ENCODE measurements at regions of chr11 and their contacts with region 1.

Region 1: DNA sequence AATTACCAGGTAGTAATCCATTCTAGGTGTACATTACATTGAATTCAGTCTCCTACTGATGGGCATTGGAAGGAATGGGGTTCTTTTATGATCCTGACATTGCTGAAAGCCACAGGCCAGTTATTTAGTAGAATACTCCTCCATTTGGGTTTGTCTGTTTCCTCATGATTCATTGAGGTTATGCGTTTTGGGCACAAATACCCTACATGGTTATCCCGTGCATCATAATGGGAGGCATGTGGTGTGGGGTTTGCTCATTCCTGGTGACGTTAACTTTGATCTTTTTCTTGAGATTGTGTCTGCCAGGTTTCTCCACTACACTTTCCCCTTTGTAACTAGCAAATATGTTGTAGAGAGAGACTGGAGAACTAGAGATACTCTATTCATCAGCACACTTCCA is 5.5 kb downstream of the FOLR3 start:
- DNase-seq: no peak
- H3K4me3 Mint-ChIP-seq: no peak overlapping the region
- H3K27ac Mint-ChIP-seq: no peak overlapping the region
- H3K4me1 Mint-ChIP-seq: peaks cover 1% of the 10 kb centered on the region
- H3K27me3 Mint-ChIP-seq: no peaks in the 10 kb centered on the region

Region 2: GRCh38 chr11:71913756-71914526 is 227.1 kb before region 1 on chr11:
- CTCF ChIA-PET with region 1: interaction called, 5 read pairs
- intact Hi-C with region 1: loop called (anchors 5 kb)
- DNase-seq: no peak
- H3K4me3 Mint-ChIP-seq: no peak overlapping the region
- H3K27ac Mint-ChIP-seq: no peak overlapping the region
- H3K4me1 Mint-ChIP-seq: peaks cover 15% of the 10 kb centered on the region
- H3K27me3 Mint-ChIP-seq: no peaks in the 10 kb centered on the region

Region 3: GRCh38 chr11:71988050-71988449 is 153.0 kb before region 1 on chr11:
- CTCF ChIA-PET with region 1: interaction called, 19 read pairs
- intact Hi-C with region 1: no loop called
- DNase-seq: no peak
- H3K4me3 Mint-ChIP-seq: no peak overlapping the region
- H3K27ac Mint-ChIP-seq: no peak overlapping the region
- H3K4me1 Mint-ChIP-seq: peaks cover 3% of the 10 kb centered on the region
- H3K27me3 Mint-ChIP-seq: no peaks in the 10 kb centered on the region

Region 4: DNA sequence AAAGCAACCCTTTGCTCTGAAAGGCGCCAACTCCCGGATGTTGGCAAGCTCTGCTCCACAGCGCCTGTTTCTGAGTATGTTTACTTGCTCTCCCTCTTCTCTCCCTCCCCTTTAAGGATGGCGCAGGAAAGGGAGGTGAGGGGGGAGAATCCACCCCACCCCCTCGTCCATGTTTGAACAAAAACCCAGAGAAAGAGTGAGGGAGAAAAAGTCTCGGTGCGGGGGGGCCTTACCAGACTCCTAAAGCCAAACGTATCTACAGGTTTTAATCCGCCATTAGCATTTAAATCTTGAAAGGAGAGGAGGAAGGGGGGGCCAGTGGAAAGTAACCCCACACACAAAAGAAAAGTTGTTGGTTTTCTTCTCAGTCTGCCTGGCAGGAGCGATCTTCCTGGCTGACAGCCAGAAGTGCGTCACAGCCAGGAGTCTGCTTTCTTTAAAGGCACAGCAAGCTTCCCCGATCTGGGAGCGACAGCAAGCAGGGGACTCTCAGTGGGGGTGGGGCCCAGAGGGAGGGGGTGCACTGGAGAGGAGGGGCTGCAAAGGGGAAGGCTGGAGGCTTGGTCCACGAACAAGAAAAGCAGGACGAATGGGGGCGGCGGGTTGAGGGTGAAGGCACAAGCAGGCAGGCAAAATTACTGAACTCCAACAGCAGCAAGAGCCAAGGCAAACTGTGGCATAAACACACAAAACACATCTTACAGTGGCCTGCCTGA is 100.2 kb before region 1 on chr11:
- CTCF ChIA-PET with region 1: interaction called, 11 read pairs
- intact Hi-C with region 1: no loop called
- DNase-seq: peak; percentile 85
- H3K4me3 Mint-ChIP-seq: no peak overlapping the region
- H3K27ac Mint-ChIP-seq: no peak overlapping the region
- H3K4me1 Mint-ChIP-seq: peaks cover 44% of the 10 kb centered on the region
- H3K27me3 Mint-ChIP-seq: no peaks in the 10 kb centered on the region

Region 5: DNA sequence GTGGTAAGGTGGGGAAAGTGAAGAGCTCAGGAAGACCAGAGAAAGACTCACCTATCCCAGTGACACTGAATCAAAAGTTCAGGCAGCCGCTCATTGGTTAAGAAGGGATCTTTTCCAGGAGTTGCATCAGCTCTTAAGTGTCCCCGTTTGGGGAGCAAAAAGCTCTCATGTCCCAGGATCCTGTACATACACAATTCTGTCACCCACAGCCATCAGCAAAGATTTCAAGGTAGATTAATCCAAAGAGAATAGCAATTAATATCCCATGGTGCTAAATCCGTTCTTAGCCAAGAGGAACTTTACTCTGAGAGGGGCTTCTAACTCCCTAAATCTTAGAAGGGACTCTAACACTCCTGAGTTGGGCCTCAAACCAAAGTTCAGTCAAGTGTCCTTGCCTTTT is 13.8 kb after region 1 on chr11:
- CTCF ChIA-PET with region 1: interaction called, 15 read pairs
- intact Hi-C with region 1: no loop called
- DNase-seq: no peak
- H3K4me3 Mint-ChIP-seq: no peak overlapping the region
- H3K27ac Mint-ChIP-seq: no peak overlapping the region
- H3K4me1 Mint-ChIP-seq: no peaks in the 10 kb centered on the region
- H3K27me3 Mint-ChIP-seq: peaks cover 2% of the 10 kb centered on the region

Region 6: GRCh38 chr11:72189461-72190275 is 48.6 kb after region 1 on chr11:
- CTCF ChIA-PET with region 1: interaction called, 10 read pairs
- intact Hi-C with region 1: no loop called
- DNase-seq: no peak
- H3K4me3 Mint-ChIP-seq: no peak overlapping the region
- H3K27ac Mint-ChIP-seq: no peak overlapping the region
- H3K4me1 Mint-ChIP-seq: no peaks in the 10 kb centered on the region
- H3K27me3 Mint-ChIP-seq: no peaks in the 10 kb centered on the region